A673 (cell line): ENCODE measurements at regions of chr5 and their contacts with region 1.

Region 1: DNA sequence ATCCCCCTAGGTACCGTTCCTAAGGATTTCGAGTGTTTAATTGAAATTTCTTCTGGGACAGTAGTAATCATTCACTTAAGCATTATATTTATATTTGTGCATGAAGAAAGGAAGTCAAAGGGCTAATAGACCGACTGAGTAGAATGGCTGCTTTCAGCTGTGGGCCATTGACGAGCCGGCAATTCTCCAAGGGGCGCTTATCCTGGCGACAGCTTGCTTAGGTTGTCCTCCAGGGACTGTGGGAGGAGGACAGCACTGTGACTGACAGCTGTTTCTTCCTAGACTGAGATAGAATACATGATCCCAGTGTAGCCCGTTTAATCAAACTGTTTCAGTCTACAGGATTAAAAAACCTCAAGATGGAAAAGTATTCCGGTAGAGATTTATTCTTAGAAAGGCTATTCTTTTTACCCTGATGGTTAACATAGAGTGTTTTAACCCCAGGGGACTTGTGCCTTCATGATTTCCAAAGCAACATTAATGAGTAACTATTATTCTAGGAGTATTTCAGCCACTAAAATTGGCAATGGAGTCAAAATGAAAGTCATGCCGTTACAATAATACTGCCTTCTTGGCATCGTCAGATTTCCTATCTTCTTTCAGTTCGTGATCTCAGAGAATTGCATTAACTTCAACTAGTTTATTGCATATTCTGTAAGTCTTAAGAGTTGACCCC is 943.1 kb upstream of the WWC1 start:
- DNase-seq: peak; percentile 87
- H3K4me3 ChIP-seq: no peak overlapping the region
- H3K27ac ChIP-seq: no peak overlapping the region
- H3K4me1 ChIP-seq: peaks cover 7% of the 10 kb centered on the region
- H3K27me3 ChIP-seq: peaks cover 8% of the 10 kb centered on the region
- CTCF ChIP-seq: no peak

Region 2: GRCh38 chr5:167128581-167128980 is 219.8 kb before region 1 on chr5:
- CTCF ChIA-PET with region 1: interaction called, 11 read pairs
- POLR2A ChIA-PET with region 1: no interaction called
- intact Hi-C with region 1: no loop called
- DNase-seq: no peak
- H3K4me3 ChIP-seq: no peak overlapping the region
- H3K27ac ChIP-seq: no peak overlapping the region
- H3K4me1 ChIP-seq: no peaks in the 10 kb centered on the region
- H3K27me3 ChIP-seq: no peaks in the 10 kb centered on the region
- CTCF ChIP-seq: no peak